Caco-2 (cell line): ENCODE measurements at regions of chr2 and their contacts with region 1.

Region 1: DNA sequence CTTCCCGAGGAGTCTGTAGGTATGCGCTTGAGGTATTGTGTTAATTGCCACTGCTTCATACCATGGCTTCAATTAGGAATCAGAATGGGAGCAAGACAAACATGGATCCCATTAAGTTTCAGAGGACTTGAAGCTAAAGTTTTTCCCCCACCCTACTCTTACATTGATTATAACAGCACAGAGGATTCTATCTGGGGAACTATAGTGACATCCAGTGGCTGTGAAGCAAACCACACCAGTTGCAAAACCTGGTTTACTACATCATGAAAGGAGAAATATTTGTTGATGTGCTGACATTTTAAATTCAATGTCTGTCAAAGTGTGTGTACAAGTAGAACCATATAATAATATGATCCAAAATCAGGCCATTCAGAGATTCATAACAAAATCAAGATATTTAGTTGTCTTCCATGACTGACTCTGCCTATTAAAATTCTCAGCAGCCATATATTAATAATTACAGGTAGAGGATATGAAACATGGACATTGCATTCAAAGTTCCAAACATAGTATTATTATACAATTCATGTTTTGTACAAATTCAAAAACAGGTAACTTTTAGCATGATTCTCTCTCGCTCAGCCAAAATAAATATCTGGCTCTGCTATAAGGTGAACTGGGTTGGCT is 82.9 kb downstream of the GRB14 start:
- DNase-seq: peak in 1 of 2 experiments; percentile 42
- H3K4me3 ChIP-seq: no peak overlapping the region
- H3K4me3 Mint-ChIP-seq: no peak overlapping the region
- H3K27ac Mint-ChIP-seq: no peak overlapping the region
- H3K4me1 ChIP-seq: no peaks in the 10 kb centered on the region
- H3K4me1 Mint-ChIP-seq: no peaks in the 10 kb centered on the region
- H3K27me3 ChIP-seq: no peaks in the 10 kb centered on the region
- H3K27me3 Mint-ChIP-seq: no peaks in the 10 kb centered on the region
- CTCF ChIP-seq: peak; percentile 70 to 84

Region 2: GRCh38 chr2:164495491-164496223 is 42.7 kb before region 1 on chr2:
- CTCF ChIA-PET with region 1: interaction called, 5 read pairs
- POLR2A ChIA-PET with region 1: no interaction called
- intact Hi-C with region 1: loop called (anchors 1 kb)
- DNase-seq: peak in 1 of 2 experiments; percentile 40
- H3K4me3 ChIP-seq: no peak overlapping the region
- H3K4me3 Mint-ChIP-seq: no peak overlapping the region
- H3K27ac Mint-ChIP-seq: no peak overlapping the region
- H3K4me1 ChIP-seq: 0 out of 2 replicates have a peak, but pooled peaks cover 10% of the 10 kb centered on the region
- H3K4me1 Mint-ChIP-seq: peaks cover 10% of the 10 kb centered on the region
- H3K27me3 ChIP-seq: no peaks in the 10 kb centered on the region
- H3K27me3 Mint-ChIP-seq: no peaks in the 10 kb centered on the region
- CTCF ChIP-seq: peak; percentile 51 to 60

Region 3: DNA sequence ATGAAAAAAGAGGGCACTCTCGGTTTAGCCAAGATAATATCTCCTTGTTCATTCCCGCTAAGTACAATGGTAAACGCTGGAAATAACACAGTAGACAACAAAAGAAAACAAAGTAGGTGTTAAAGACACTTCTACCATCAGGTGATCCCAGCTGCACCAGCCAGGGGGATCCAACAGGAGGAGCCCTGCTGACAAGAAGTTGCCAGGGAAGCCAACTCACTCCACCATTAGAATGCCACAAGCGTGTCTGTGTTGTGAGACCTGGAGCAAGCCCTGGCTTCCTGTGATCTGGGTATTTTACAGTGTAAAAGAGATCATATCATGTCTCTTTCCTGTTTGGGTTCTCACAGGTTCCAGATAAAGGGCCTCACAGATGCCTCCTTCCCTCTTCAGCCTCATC is 34.1 kb before region 1 on chr2:
- CTCF ChIA-PET with region 1: interaction called, 7 read pairs
- POLR2A ChIA-PET with region 1: no interaction called
- intact Hi-C with region 1: loop called (anchors 1 kb)
- DNase-seq: peak; percentile 51
- H3K4me3 ChIP-seq: no peak overlapping the region
- H3K4me3 Mint-ChIP-seq: no peak overlapping the region
- H3K27ac Mint-ChIP-seq: no peak overlapping the region
- H3K4me1 ChIP-seq: 0 out of 2 replicates have a peak, but pooled peaks cover 1% of the 10 kb centered on the region
- H3K4me1 Mint-ChIP-seq: no peaks in the 10 kb centered on the region
- H3K27me3 ChIP-seq: no peaks in the 10 kb centered on the region
- H3K27me3 Mint-ChIP-seq: no peaks in the 10 kb centered on the region
- CTCF ChIP-seq: peak; percentile 56 to 64

Region 4: GRCh38 chr2:164523009-164523408 is 15.3 kb before region 1 on chr2:
- CTCF ChIA-PET with region 1: no interaction called
- POLR2A ChIA-PET with region 1: no interaction called
- intact Hi-C with region 1: no loop called
- DNase-seq: no peak
- H3K4me3 ChIP-seq: no peak overlapping the region
- H3K4me3 Mint-ChIP-seq: no peak overlapping the region
- H3K27ac Mint-ChIP-seq: no peak overlapping the region
- H3K4me1 ChIP-seq: peaks cover 7% of the 10 kb centered on the region
- H3K4me1 Mint-ChIP-seq: no peaks in the 10 kb centered on the region
- H3K27me3 ChIP-seq: no peaks in the 10 kb centered on the region
- H3K27me3 Mint-ChIP-seq: no peaks in the 10 kb centered on the region
- CTCF ChIP-seq: no peak

Region 5: GRCh38 chr2:165141601-165142354 is 603.4 kb after region 1 on chr2:
- CTCF ChIA-PET with region 1: no interaction called
- POLR2A ChIA-PET with region 1: no interaction called
- intact Hi-C with region 1: no loop called
- DNase-seq: no peak
- H3K4me3 ChIP-seq: no peak overlapping the region
- H3K4me3 Mint-ChIP-seq: no peak overlapping the region
- H3K27ac Mint-ChIP-seq: no peak overlapping the region
- H3K4me1 ChIP-seq: no peaks in the 10 kb centered on the region
- H3K4me1 Mint-ChIP-seq: no peaks in the 10 kb centered on the region
- H3K27me3 ChIP-seq: no peaks in the 10 kb centered on the region
- H3K27me3 Mint-ChIP-seq: peaks cover 13% of the 10 kb centered on the region
- CTCF ChIP-seq: peak in 1 of 2 experiments; percentile 48